CD4-positive, alpha-beta memory T cell (primary cell): ENCODE measurements at regions of chr3 and their contacts with region 1.

Region 1: GRCh38 chr3:30012941-30013543 is 593.4 kb upstream of the TGFBR2 start:
- DNase-seq: peak; percentile 11 to 33 (median 26)
- H3K4me3 ChIP-seq: no peak overlapping the region
- H3K4me3 Mint-ChIP-seq: no peak overlapping the region
- H3K27ac ChIP-seq: no peak overlapping the region
- H3K27ac Mint-ChIP-seq: no peak overlapping the region
- H3K4me1 ChIP-seq: no peaks in the 10 kb centered on the region
- H3K4me1 Mint-ChIP-seq: no peaks in the 10 kb centered on the region
- H3K27me3 ChIP-seq: no peaks in the 10 kb centered on the region
- H3K27me3 Mint-ChIP-seq: peaks cover 0 to 12% of the 10 kb centered on the region in 2 donors

Region 2: DNA sequence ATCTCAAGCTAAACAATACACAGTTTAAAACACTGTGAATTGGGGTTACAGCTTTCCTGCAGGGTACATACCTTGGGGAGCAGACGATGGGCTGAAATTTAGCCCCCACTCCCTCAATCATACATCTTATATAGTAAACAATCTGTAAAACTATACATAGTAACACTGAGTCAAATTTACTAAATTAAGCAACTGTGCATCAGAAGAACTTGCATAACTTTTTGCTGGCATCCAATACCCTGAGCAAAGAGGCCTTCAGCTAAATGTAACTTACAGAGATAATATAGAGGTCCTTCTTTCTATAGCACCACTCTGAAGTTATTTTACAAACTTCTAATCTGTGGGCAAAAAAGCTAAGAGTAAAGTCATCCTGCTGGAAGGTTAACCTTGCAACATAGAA is 10.2 kb before region 1 on chr3:
- CTCF ChIA-PET with region 1: interaction called, 12 read pairs
- POLR2A ChIA-PET with region 1: no interaction called
- intact Hi-C with region 1: no loop called
- DNase-seq: no peak
- H3K4me3 ChIP-seq: no peak overlapping the region
- H3K4me3 Mint-ChIP-seq: no peak overlapping the region
- H3K27ac ChIP-seq: no peak overlapping the region
- H3K27ac Mint-ChIP-seq: no peak overlapping the region
- H3K4me1 ChIP-seq: no peaks in the 10 kb centered on the region
- H3K4me1 Mint-ChIP-seq: no peaks in the 10 kb centered on the region
- H3K27me3 ChIP-seq: no peaks in the 10 kb centered on the region
- H3K27me3 Mint-ChIP-seq: no peaks in the 10 kb centered on the region

Region 3: GRCh38 chr3:30059240-30059639 is 46.2 kb after region 1 on chr3:
- CTCF ChIA-PET with region 1: no interaction called
- POLR2A ChIA-PET with region 1: no interaction called
- intact Hi-C with region 1: no loop called
- DNase-seq: no peak
- H3K4me3 ChIP-seq: no peak overlapping the region
- H3K4me3 Mint-ChIP-seq: no peak overlapping the region
- H3K27ac ChIP-seq: no peak overlapping the region
- H3K27ac Mint-ChIP-seq: no peak overlapping the region
- H3K4me1 ChIP-seq: no peaks in the 10 kb centered on the region
- H3K4me1 Mint-ChIP-seq: no peaks in the 10 kb centered on the region
- H3K27me3 ChIP-seq: no peaks in the 10 kb centered on the region
- H3K27me3 Mint-ChIP-seq: peaks cover 1 to 2% of the 10 kb centered on the region in 2 donors

Region 4: DNA sequence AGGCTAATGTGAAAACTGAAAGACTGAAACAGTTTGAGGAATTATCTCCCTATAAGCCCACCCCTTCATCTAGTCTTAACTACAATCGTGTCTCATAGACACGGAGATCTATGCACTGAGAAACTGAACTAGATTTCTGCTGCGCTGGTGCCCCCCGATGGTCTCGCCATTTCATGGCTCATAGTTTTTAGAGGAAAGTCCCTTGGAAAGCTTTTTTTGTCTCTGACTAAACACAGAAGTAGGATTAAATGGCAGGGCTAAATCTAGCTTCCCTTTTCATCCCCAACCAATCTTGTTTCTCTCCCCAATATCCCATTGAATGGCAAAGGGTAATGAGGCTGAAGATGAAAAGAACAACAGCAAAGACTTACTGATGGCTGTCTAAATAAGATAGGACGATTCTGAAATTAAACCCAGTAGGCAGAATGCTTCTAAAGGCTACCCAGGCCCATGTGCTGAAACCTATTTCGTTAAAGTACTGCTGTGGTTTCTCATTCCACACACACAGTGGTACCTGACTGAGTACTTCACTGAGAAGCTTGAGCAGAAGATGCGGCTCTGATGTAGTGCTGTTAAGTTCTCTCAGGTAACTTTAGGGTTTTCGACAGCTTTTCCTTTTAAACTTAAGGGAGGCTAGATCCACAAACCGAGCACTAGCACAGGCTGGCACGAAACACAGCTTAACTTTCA is 738.7 kb after region 1 on chr3:
- CTCF ChIA-PET with region 1: interaction called, 47 read pairs
- POLR2A ChIA-PET with region 1: no interaction called
- intact Hi-C with region 1: loop called (anchors 1 kb)
- DNase-seq: peak in 4 of 5 donors; percentile 29 to 33 (median 30)
- H3K4me3 ChIP-seq: no peak overlapping the region
- H3K4me3 Mint-ChIP-seq: no peak overlapping the region
- H3K27ac ChIP-seq: no peak overlapping the region
- H3K27ac Mint-ChIP-seq: no peak overlapping the region
- H3K4me1 ChIP-seq: no peaks in the 10 kb centered on the region
- H3K4me1 Mint-ChIP-seq: peaks cover 0 to 1% (median 0%) of the 10 kb centered on the region in 4 donors
- H3K27me3 ChIP-seq: no peaks in the 10 kb centered on the region
- H3K27me3 Mint-ChIP-seq: peaks cover 7 to 8% of the 10 kb centered on the region in 2 donors

Region 5: DNA sequence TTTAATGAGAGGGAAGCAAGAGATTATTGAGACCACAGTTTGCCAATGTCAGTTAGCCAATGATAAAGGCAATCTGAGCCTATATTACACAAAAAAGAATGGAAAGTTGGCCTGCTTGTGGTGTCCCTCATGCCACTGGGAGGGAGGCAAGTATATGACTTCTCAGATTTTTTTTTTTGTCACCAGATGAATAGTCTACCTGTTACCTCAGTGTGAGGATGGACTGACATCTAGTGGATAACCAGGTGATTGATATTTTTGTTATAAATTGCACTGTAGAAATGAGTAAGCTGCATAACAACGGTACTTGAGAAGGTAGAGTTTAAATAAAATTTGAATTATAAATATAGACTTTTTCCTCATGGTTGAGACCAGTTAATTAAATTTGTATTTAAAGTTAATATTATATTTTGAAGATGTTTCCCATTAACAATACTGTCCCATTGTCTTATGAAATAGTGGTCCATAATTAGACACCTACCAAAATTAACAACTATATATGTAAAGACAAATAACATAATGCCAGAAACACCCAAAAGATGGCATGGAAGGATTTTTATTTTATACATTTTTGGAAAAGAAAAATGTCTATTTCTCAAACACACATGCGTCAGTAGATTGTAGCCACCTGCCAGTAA is 1119.2 kb after region 1 on chr3:
- CTCF ChIA-PET with region 1: no interaction called
- POLR2A ChIA-PET with region 1: no interaction called
- intact Hi-C with region 1: loop called (anchors 10 kb)
- DNase-seq: peak in 4 of 5 donors; percentile 37 to 47 (median 44)
- H3K4me3 ChIP-seq: no peak overlapping the region
- H3K4me3 Mint-ChIP-seq: no peak overlapping the region
- H3K27ac ChIP-seq: no peak overlapping the region
- H3K27ac Mint-ChIP-seq: no peak overlapping the region
- H3K4me1 ChIP-seq: no peaks in the 10 kb centered on the region
- H3K4me1 Mint-ChIP-seq: peaks cover 0 to 6% (median 1%) of the 10 kb centered on the region in 4 donors
- H3K27me3 ChIP-seq: no peaks in the 10 kb centered on the region
- H3K27me3 Mint-ChIP-seq: no peaks in the 10 kb centered on the region